MCF 10A (cell line): ENCODE measurements at regions of chr12 and their contacts with region 1.

Region 1: GRCh38 chr12:32455607-32456071 is 56.3 kb downstream of the FGD4 start:
- DNase-seq: peak; percentile 75
- H3K4me3 Mint-ChIP-seq: peak overlapping the region; percentile 48
- H3K27ac Mint-ChIP-seq: peak overlapping the region; percentile 91
- H3K4me1 Mint-ChIP-seq: peaks cover 60% of the 10 kb centered on the region
- H3K27me3 Mint-ChIP-seq: no peaks in the 10 kb centered on the region
- CTCF ChIP-seq: peak; percentile 78

Region 2: DNA sequence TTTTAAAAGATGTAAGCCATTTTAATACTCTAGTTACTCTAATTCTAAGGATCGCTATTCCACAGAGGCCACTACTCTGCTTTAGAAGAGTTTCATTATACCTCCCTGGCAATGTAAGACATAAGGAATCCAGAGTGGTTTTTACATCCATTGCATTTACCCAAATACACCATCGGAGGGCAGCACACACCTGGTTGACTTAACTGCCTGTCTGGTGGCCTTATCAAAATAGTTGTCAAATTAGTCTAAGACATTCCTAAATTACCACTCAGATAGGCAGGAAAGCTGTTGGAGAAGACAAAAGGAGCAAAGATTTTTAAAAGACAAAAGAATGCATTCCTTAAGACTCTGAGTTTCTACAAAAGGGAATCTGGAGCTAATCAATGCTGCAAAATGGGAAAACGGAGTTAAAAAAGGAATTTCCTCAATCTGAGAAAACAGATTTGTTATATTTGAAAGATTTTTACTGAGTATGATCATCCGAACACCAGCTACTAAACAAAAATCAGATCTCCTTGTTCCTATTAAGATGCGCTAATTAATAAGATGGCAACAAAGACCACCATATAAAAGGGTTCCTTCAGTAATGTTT is 90.1 kb before region 1 on chr12:
- CTCF ChIA-PET with region 1: interaction called, 32 read pairs
- POLR2A ChIA-PET with region 1: interaction called, 3 read pairs
- intact Hi-C with region 1: loop called (anchors 1 kb)
- DNase-seq: peak; percentile 81
- H3K4me3 Mint-ChIP-seq: no peak overlapping the region
- H3K27ac Mint-ChIP-seq: no peak overlapping the region
- H3K4me1 Mint-ChIP-seq: peaks cover 5% of the 10 kb centered on the region
- H3K27me3 Mint-ChIP-seq: no peaks in the 10 kb centered on the region
- CTCF ChIP-seq: peak; percentile 85

Region 3: GRCh38 chr12:32437095-32437515 is 18.5 kb before region 1 on chr12:
- CTCF ChIA-PET with region 1: interaction called, 11 read pairs
- POLR2A ChIA-PET with region 1: interaction called, 16 read pairs
- intact Hi-C with region 1: no loop called
- DNase-seq: peak; percentile 91
- H3K4me3 Mint-ChIP-seq: peak overlapping the region; percentile 38
- H3K27ac Mint-ChIP-seq: peak overlapping the region; percentile 93
- H3K4me1 Mint-ChIP-seq: peaks cover 63% of the 10 kb centered on the region
- H3K27me3 Mint-ChIP-seq: no peaks in the 10 kb centered on the region
- CTCF ChIP-seq: no peak

Region 4: DNA sequence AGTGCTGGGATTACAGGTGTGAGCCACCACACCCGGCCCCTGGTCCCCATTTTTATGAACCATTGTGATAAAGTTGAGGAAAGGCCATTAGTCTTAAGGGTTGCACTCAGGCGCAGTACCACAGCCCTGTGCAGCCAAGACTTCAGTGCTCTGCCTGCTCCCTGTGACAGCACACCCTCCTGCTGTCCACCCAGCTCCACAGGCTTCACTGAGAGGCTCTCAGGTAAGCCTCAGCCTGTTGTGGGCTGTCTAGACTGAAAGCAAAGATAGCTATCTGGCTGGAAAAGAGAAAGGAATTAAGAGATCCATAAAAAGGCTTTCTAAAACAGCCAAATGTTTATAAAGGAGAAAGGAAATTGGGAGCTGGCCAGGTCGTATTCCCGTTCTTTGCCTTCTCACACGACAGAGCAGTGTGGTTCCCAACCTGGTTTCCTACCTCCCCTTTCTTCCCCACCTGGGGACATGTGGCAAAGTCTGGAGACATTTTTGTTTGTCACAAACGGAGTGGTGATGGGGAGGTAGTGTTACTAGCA is 204.3 kb after region 1 on chr12:
- CTCF ChIA-PET with region 1: interaction called, 13 read pairs
- POLR2A ChIA-PET with region 1: interaction called, 4 read pairs
- intact Hi-C with region 1: loop called (anchors 1 kb)
- DNase-seq: no peak
- H3K4me3 Mint-ChIP-seq: no peak overlapping the region
- H3K27ac Mint-ChIP-seq: no peak overlapping the region
- H3K4me1 Mint-ChIP-seq: no peaks in the 10 kb centered on the region
- H3K27me3 Mint-ChIP-seq: no peaks in the 10 kb centered on the region
- CTCF ChIP-seq: no peak